Activated CD4-positive, alpha-beta T cell treated with anti-CD3 and anti-CD28 coated beads for 36 hours (primary cell): ENCODE measurements at regions of chr19 and their contacts with region 1.

Region 1: GRCh38 chr19:53365134-53365898 is at the start of gene ZNF525:
- DNase-seq: peak; percentile 98
- ATAC-seq: peak; percentile 100
- H3K4me3 Mint-ChIP-seq: peak within 1 kb of the TSS; percentile 93
- H3K27ac Mint-ChIP-seq: peak within 1 kb of the TSS; percentile 95
- H3K4me1 Mint-ChIP-seq: peaks cover 26% of the 10 kb centered on the region
- H3K27me3 Mint-ChIP-seq: no peaks in the 10 kb centered on the region
- total RNA-seq, gene ZNF525: 21.5 to 27.8 TPM

Region 2: GRCh38 chr19:52897144-52897935 is 468.0 kb before region 1 on chr19 and contains the start of gene ZNF320:
- CTCF ChIA-PET with region 1: no interaction called
- POLR2A ChIA-PET with region 1: no interaction called
- intact Hi-C with region 1: loop called in 1 of 2 experiments (anchors 5 kb)
- DNase-seq: peak; percentile 98
- ATAC-seq: peak; percentile 100
- H3K4me3 Mint-ChIP-seq: peak within 1 kb of the TSS; percentile 88
- H3K27ac Mint-ChIP-seq: peak within 1 kb of the TSS; percentile 93
- H3K4me1 Mint-ChIP-seq: peaks cover 31% of the 10 kb centered on the region
- H3K27me3 Mint-ChIP-seq: no peaks in the 10 kb centered on the region
- total RNA-seq, gene ZNF320: 10.8 to 12.2 TPM

Region 3: DNA sequence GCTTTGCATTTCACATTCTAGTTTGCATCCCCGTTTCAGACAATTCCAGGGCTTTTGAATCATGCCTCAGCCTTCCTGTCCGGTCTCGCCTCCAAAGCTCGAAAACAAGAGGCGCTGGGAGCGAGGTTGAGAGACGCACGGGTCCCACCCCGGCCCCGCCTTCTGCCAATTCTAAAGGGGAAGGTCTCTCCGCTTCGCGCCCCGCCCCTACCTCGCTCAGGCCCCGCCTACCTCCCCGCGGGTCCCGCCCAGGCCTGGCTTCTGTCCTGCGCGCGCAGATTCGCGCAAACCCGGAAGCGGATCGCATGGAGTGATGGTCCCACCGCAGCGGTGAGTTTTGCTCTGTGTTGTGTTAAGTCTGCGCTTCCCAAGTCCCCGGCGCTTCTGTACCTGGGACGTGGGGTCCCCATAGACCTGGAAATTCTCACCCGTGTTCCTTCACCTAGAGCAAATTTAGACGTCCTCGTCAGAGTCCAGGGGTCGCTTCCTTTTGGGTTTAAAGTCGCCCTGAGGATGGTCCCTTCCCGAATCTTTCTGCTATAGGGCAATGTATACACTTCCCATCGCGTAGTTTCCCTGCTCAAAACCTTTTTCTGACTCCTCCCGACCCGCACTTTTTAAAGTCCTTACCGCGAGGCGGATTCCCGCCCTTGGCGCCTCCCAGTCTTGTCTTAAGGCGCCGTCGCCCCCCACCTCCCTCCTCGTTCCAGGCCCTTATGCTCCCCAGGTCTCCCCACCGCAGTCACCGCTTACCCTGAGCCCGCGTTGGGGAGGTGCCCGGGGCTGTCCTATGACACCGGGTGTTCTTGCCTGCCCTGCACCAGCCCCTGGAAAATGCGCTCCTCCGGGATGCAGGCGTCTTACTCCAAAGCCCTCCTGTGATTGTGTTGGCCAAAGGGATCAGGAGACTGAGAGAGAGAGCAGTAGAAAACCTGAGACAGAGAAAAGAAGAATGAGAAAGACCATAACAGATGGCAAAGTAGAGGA is 31.6 kb before region 1 on chr19 and contains the start of gene ZNF845:
- CTCF ChIA-PET with region 1: no interaction called
- POLR2A ChIA-PET with region 1: no interaction called
- intact Hi-C with region 1: loop called (anchors 1 to 2 kb)
- DNase-seq: peak; percentile 97
- ATAC-seq: peak; percentile 99
- H3K4me3 Mint-ChIP-seq: peak within 1 kb of the TSS; percentile 88
- H3K27ac Mint-ChIP-seq: peak within 1 kb of the TSS; percentile 92
- H3K4me1 Mint-ChIP-seq: peaks cover 10% of the 10 kb centered on the region
- H3K27me3 Mint-ChIP-seq: peaks cover 5% of the 10 kb centered on the region
- total RNA-seq, gene ZNF845: 5.9 to 6.3 TPM

Region 4: GRCh38 chr19:53394974-53395839 is 29.9 kb after region 1 on chr19 and contains the start of gene ZNF765:
- CTCF ChIA-PET with region 1: no interaction called
- POLR2A ChIA-PET with region 1: no interaction called
- intact Hi-C with region 1: loop called (anchors 1 kb)
- DNase-seq: peak; percentile 98
- ATAC-seq: peak; percentile 99
- H3K4me3 Mint-ChIP-seq: peak within 1 kb of the TSS; percentile 84
- H3K27ac Mint-ChIP-seq: peak within 1 kb of the TSS; percentile 89
- H3K4me1 Mint-ChIP-seq: peaks cover 25% of the 10 kb centered on the region
- H3K27me3 Mint-ChIP-seq: no peaks in the 10 kb centered on the region
- total RNA-seq, gene ZNF765: 10.7 to 10.9 TPM

Region 5: DNA sequence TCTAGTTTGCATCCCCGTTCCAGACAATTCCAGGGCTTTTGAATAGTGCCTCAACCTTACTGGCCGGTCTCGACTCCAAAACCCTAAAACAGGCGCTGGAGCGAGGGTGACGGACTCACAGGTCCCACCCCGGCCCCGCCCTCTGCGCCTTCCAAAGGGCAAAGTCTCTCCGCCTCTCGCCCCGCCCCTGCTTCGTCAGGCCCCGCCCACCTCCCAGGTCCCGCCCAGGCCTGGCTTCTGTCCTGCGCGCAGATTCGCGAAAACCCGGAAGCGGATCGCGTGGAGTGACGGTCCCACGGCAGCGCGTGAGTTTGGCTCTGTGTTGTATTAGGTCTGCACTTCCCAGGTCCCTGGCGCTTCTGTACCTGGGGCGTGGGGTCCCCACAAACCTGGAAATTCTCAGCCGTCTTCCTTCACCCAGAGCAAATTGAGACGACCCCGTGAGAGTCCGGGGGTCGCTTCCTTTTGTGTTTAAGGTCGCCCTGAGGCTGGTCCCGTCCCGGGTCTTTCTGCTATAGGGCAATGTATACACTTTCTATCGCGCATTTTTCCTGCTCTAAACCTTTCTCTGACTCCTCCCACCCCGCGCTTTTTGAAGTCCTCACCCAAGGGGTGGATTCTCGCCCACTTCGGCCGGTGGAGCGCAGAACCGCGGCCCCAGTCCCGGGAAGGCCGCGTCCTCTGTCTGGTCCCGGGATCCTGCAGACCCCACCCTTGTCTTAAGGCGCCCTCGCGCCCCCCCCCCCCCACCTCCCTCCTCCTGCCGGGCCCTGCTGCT is 102.4 kb after region 1 on chr19 and contains the start of gene ZNF813:
- CTCF ChIA-PET with region 1: no interaction called
- POLR2A ChIA-PET with region 1: no interaction called
- intact Hi-C with region 1: loop called in 1 of 2 experiments (anchors 1 kb)
- DNase-seq: peak; percentile 98
- ATAC-seq: peak; percentile 98
- H3K4me3 Mint-ChIP-seq: peak within 1 kb of the TSS; percentile 80
- H3K27ac Mint-ChIP-seq: peak within 1 kb of the TSS; percentile 87
- H3K4me1 Mint-ChIP-seq: peaks cover 20% of the 10 kb centered on the region
- H3K27me3 Mint-ChIP-seq: peaks cover 9% of the 10 kb centered on the region
- total RNA-seq, gene ZNF813: 5.8 to 7.4 TPM

Region 6: DNA sequence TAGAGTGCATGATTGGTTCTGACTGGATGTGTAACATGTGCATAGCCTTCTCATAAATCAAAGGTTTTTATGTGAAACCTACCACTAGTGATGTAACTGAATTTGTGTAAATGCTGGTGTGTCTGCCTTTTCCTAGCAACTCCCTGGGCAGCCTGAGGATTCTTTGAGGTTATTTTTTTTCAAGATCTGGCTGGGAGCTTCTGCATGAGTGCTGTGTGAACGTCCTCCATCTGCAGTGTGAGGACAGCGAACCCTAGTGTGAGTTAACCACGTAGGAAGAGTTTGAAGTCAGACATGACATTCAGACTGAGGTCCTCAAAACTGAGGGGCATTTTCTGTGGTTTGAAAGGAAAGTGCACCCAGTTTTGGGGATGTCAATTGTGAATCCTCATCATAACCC is 306.3 kb after region 1 on chr19:
- CTCF ChIA-PET with region 1: no interaction called
- POLR2A ChIA-PET with region 1: no interaction called
- intact Hi-C with region 1: no loop called
- DNase-seq: no peak
- ATAC-seq: no peak
- H3K4me3 Mint-ChIP-seq: no peak overlapping the region
- H3K27ac Mint-ChIP-seq: no peak overlapping the region
- H3K4me1 Mint-ChIP-seq: no peaks in the 10 kb centered on the region
- H3K27me3 Mint-ChIP-seq: no peaks in the 10 kb centered on the region